Right ventricle myocardium inferior (tissue), 1 donor: ENCODE measurements at regions of chr10 and their contacts with region 1.

Region 1: DNA sequence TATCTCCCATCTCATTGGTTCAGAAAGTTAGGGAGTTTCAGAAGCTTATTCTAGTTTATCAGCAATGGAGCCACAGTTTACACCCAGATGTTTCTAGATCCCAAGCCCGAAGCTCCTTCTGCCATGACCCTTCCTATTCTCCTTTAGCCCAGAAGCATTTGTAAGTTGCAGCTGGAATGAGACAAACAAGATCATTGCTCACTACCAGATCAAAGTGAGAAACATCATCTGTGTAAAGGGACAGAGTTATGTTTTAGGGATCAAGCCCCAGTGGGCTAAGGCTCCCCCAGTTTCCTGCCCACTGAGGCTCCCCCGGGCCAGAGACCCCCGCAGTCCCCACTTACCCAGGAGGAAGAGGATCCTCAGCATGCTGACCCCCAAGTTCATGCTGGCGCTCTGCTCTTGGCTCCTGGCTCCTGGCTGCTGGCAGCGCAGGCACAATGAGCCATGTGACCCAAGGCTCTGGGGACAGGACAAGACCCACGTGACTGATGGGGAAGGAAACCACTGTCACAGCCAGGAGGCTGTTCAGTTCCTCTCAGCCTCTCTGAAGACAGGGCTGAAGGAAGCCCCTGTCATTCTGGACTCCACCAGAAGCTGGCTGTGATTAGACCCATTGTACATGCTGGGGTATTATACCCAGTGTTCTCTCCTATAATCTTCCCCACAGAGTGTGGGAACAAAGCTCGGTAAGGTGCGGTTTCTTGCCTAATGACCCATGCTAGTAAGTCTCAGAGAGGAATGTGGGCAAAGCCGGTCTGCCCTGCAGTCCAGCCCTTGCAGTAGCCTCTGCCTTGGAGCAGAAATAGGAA is at the start of gene TMEM273:
- DNase-seq: peak; percentile 88
- ATAC-seq: peak; percentile 95
- total RNA-seq, gene TMEM273: 27.9 TPM

Region 2: DNA sequence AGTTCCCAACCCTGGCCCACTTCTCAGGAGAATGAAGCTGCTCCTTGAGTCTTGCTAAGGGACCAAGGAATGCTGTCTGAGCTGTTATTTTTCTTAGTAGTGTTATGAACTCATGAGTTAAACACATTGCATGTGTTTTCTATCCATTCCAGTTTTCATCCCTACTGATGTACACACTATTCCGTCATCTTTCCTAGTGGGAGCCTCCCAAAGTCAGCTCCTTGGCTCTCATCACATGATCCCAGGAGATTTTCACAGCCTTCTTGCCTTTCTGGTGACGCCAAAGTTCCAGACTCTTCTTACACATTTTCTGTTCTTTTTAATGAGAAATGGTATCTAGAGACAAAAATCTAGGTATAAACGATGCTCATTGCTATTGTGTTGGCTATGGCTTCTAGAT is 102.5 kb after region 1 on chr10:
- intact Hi-C with region 1: loop called (anchors 5 kb)
- DNase-seq: no peak
- ATAC-seq: no peak